Mammary epithelial cell (primary cell): ENCODE measurements at regions of chr19 and their contacts with region 1.

Region 1: GRCh38 chr19:47296036-47296435 is 13.6 kb upstream of the C5AR1 start:
- DNase-seq: peak; percentile 63
- H3K4me3 ChIP-seq: no peak overlapping the region
- H3K27ac ChIP-seq: no peak overlapping the region
- H3K4me1 ChIP-seq: no peaks in the 10 kb centered on the region
- H3K27me3 ChIP-seq: no peaks in the 10 kb centered on the region
- CTCF ChIP-seq: peak; percentile 51 to 76

Region 2: DNA sequence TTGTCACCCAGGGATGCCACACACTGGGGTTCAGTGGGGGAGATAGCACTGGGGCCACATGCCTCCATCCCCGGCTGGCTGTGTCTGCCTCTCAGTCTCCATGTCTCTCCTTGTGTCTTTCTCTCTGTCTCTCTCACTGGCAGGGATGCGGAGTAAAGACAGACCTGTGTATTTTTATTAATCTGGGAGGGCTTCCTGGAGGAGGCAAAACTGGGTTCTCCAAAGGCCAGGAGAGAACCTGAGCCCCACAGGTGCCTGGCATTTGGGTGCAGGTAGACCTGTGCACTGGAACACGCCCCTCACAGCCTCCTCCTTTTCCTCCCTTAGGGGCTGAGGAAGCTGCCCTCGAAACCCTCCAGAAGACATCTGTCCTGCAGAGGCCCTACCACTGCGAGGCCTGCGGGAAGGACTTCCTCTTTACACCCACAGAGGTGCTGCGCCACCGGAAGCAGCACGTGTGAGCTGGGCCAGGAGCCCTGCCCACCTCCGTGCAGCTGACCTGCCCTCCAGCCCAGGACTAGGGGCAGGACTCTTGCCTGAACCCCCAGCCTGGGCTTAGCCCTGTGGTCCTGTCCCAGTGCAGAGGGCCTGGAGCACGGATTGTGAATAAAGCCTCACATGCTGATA is 85.7 kb after region 1 on chr19:
- CTCF ChIA-PET with region 1: no interaction called
- dilution Hi-C with region 1: loop called (anchors 5 kb)
- in situ Hi-C with region 1: no loop called
- intact Hi-C with region 1: no loop called
- DNase-seq: no peak
- H3K4me3 ChIP-seq: no peak overlapping the region
- H3K27ac ChIP-seq: no peak overlapping the region
- H3K4me1 ChIP-seq: no peaks in the 10 kb centered on the region
- H3K27me3 ChIP-seq: no peaks in the 10 kb centered on the region
- CTCF ChIP-seq: no peak

Region 3: DNA sequence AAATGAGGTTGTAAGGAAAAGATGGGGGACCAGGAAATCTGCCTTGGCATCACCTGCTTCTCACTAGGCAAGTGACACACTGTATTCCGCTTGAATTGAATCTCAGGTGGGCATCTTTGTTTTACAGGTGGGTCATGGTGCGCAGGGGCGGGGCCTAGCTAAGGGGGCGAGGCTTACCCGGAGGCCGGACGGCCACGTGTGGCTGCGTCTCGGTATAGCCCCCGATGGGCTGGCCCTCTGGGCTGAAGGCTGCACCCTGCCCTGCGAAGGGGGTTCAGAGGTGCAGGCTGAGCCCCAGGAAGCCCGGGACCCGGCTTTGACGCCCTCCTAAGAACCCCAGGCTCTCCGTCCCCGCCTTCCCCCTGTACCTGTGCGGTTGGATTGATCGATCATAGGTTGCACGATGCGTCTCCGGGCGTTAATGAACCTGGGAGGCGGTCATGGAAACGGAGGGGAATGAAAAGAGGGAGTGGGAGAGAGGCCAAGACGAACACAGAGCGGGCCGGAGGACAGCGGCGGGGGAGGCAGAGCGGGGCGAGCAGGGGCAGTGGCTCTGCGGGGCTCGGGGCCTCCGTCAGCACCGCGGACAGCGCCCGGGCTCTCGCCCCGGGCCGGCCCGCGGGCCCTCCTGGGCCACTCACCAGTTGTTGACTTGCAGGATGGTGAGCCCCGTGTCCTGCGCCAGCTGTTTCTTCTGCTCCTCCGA is 110.8 kb after region 1 on chr19:
- CTCF ChIA-PET with region 1: no interaction called
- dilution Hi-C with region 1: no loop called
- in situ Hi-C with region 1: loop called in 1 of 2 experiments (anchors 10 kb)
- intact Hi-C with region 1: no loop called
- DNase-seq: no peak
- H3K4me3 ChIP-seq: no peak overlapping the region
- H3K27ac ChIP-seq: no peak overlapping the region
- H3K4me1 ChIP-seq: no peaks in the 10 kb centered on the region
- H3K27me3 ChIP-seq: peaks cover 8% of the 10 kb centered on the region
- CTCF ChIP-seq: no peak

Region 4: GRCh38 chr19:47428177-47428894 is 132.3 kb after region 1 on chr19:
- CTCF ChIA-PET with region 1: interaction called, 4 read pairs
- dilution Hi-C with region 1: no loop called
- in situ Hi-C with region 1: no loop called
- intact Hi-C with region 1: loop called (anchors 1 kb)
- DNase-seq: peak; percentile 96
- H3K4me3 ChIP-seq: peak overlapping the region in 1 of 3 experiments; percentile 1
- H3K27ac ChIP-seq: no peak overlapping the region
- H3K4me1 ChIP-seq: peaks cover 20% of the 10 kb centered on the region
- H3K27me3 ChIP-seq: no peaks in the 10 kb centered on the region
- CTCF ChIP-seq: no peak

Region 5: DNA sequence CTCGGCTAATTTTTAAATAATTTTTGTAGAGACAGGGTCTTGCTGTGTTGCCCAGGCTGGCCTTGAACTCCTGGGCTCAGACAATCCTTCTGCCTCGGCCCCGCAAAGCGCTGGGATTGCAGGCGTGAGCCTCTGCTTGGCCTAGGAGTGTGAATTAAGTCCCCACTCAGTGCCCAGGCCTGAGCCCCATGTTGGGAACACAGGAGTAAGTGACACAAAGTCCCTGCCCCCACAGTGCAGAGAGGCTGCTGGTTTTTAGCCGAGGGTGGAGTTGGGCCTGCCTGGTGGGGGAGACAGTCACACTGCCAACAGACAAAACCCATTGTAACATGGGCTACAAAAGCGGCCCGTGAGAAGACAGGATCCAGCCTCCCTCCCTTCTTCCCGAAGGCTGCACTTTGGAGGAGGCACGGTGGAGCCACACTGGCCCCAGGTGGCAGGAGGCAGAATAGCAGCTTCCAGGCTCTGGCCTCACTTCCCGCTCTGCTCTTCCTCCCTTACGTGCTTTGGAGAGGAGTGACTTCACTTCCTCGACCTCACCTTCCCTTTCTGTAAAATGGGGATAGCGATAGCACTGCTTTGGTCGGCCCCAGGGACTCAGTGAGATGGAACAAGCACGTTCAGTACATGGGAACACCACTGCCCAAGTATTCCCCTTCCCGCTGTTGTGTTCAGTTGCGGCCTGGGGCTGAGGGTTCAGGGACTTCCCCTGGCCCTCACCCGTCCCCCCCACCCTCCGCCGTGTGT is 402.0 kb after region 1 on chr19:
- CTCF ChIA-PET with region 1: no interaction called
- dilution Hi-C with region 1: no loop called
- in situ Hi-C with region 1: loop called in 1 of 2 experiments (anchors 25 kb)
- intact Hi-C with region 1: loop called (anchors 5 kb)
- DNase-seq: peak; percentile 72
- H3K4me3 ChIP-seq: no peak overlapping the region
- H3K27ac ChIP-seq: no peak overlapping the region
- H3K4me1 ChIP-seq: no peaks in the 10 kb centered on the region
- H3K27me3 ChIP-seq: no peaks in the 10 kb centered on the region
- CTCF ChIP-seq: peak; percentile 99